GM10248 (cell line): ENCODE measurements at regions of chr5 and their contacts with region 1.

Region 1: DNA sequence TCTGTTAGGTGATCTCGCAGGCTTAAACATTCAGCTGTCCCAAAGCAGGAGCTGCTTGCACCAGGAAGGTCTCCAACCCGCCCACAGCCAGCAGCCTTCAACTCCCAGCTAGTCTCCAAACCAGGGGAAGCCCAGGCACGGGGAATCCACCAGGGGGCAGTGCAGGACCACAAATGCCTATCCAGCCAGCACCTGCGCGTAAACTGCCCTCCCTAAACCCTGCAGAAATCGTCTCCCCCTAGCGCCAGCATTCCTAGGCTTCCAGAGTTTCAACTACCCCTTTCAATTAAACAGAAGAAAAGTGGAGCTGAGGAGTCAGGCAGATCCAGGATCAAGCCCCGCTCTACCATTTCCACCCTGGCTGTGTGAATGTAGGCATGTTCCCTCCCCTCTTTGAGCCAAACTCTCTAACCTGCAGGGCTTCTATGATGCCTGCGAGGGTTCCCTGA is 72.0 kb downstream of the HRH2 start:
- DNase-seq: peak; percentile 88
- CTCF ChIP-seq: peak; percentile 92

Region 2: GRCh38 chr5:175534070-175534932 is 195.6 kb before region 1 on chr5:
- CTCF ChIA-PET with region 1: interaction called, 15 read pairs
- POLR2A ChIA-PET with region 1: no interaction called
- DNase-seq: peak; percentile 85
- CTCF ChIP-seq: peak; percentile 99

Region 3: GRCh38 chr5:175638305-175638704 is 91.5 kb before region 1 on chr5:
- CTCF ChIA-PET with region 1: no interaction called
- POLR2A ChIA-PET with region 1: no interaction called
- DNase-seq: no peak
- CTCF ChIP-seq: no peak

Region 4: DNA sequence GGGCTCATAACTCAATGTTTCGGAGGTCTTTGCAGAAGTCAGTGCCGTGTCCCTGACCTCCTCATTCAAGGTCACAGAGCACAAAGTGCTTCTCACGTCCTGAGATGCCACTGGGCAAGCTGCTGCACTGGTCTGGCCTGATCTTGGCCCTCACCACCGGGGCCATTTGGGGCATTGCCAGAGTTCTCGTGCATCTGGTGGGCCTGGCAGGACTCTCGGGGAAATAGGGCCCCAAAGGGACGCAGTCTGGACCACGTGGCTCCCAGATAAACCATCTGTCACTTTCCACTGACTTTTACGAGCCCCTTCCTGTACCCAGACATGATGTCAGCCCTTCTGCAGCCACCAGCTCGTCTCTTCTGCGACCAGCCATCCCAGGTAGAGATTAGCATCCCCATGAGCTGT is 17.2 kb before region 1 on chr5:
- CTCF ChIA-PET with region 1: interaction called, 41 read pairs
- POLR2A ChIA-PET with region 1: no interaction called
- DNase-seq: no peak
- CTCF ChIP-seq: no peak

Region 5: DNA sequence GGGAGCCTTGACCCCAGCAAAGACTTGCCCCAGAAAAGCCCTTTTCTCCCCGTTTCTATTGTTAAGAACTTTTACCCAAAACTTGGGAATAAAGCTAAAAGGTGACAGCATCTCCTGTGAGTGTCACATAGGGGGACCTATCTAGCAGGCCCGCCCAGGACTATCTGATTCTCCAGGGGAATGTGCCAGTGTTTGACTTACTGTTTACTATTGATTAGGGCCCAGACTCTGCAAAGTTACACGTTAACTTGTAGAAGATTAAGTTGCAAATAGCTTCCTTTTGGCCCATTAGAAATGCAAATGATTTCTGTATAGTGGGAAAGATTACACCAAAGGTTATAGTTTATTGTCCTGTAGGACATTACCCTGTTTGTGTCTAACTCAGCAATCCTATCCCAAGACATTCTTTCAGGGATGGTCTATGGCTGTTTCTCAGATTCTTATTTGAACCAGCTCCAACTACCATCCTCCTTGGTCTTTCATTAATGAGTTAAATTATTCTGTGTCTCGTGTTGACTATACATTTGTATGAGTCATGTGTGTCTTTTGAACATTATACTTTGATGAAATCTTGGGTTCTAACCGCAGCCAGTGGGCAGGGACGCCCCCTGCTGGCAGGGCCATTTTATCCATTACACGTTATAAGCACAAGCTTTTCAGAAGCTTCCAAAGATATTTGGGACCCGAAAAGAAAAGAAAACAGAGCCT is 11.3 kb before region 1 on chr5:
- CTCF ChIA-PET with region 1: interaction called, 41 read pairs
- POLR2A ChIA-PET with region 1: no interaction called
- DNase-seq: no peak
- CTCF ChIP-seq: peak; percentile 34

Region 6: GRCh38 chr5:175741556-175741955 is 11.7 kb after region 1 on chr5:
- CTCF ChIA-PET with region 1: interaction called, 26 read pairs
- POLR2A ChIA-PET with region 1: no interaction called
- DNase-seq: no peak
- CTCF ChIP-seq: no peak

Region 7: DNA sequence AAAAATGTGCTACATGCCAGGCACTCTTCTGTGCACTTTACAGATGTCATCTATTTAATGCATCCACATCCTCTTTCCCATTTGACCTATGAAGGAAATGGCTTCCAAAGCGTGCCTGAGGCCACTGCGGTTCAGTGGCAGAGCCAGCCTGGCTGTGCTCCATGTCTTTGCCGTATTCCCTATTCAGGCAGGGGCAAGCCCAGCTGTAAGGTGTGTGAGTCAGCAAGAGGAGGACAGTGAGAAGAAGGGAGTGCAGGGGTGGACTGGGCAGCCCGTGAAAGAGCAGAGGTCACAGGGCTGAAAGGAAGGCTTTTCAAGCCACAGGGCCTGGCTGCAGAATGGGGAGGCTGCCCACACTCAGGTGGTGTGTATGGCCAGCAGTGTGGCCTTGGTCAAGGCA is 19.7 kb after region 1 on chr5:
- CTCF ChIA-PET with region 1: interaction called, 11 read pairs
- POLR2A ChIA-PET with region 1: no interaction called
- DNase-seq: no peak
- CTCF ChIP-seq: no peak